AG04450 (cell line): ENCODE measurements at regions of chr16 and their contacts with region 1.

Region 1: GRCh38 chr16:88737298-88738150 is 31.2 kb downstream of the CTU2 start:
- DNase-seq: peak; percentile 29
- H3K4me3 ChIP-seq: no peak overlapping the region
- H3K27ac ChIP-seq: peak overlapping the region; percentile 21
- H3K27me3 ChIP-seq: no peaks in the 10 kb centered on the region
- CTCF ChIP-seq: peak; percentile 73

Region 2: DNA sequence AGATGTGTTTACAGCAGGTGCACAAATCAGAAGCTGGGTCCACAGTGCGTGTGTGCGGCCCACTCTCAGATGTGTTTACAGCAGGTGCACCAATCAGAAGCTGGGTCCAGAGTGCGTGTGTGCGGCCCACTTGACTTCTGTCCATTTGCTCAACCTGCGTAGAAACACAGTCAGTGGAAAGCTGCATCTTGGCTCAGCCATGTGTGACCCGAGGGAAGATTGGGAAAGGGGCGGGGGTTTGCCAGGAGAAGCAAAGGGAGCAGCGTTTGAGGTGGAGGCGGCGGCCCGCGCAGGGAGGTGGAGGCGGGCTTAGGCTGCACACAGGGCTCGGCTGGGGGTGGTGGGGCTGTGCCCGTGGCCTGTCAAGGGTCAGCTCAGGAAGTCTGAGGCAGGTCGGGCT is 27.0 kb before region 1 on chr16:
- CTCF ChIA-PET with region 1: interaction called, 10 read pairs
- POLR2A ChIA-PET with region 1: interaction called, 3 read pairs
- DNase-seq: no peak
- H3K4me3 ChIP-seq: no peak overlapping the region
- H3K27ac ChIP-seq: no peak overlapping the region
- H3K27me3 ChIP-seq: no peaks in the 10 kb centered on the region
- CTCF ChIP-seq: no peak

Region 3: DNA sequence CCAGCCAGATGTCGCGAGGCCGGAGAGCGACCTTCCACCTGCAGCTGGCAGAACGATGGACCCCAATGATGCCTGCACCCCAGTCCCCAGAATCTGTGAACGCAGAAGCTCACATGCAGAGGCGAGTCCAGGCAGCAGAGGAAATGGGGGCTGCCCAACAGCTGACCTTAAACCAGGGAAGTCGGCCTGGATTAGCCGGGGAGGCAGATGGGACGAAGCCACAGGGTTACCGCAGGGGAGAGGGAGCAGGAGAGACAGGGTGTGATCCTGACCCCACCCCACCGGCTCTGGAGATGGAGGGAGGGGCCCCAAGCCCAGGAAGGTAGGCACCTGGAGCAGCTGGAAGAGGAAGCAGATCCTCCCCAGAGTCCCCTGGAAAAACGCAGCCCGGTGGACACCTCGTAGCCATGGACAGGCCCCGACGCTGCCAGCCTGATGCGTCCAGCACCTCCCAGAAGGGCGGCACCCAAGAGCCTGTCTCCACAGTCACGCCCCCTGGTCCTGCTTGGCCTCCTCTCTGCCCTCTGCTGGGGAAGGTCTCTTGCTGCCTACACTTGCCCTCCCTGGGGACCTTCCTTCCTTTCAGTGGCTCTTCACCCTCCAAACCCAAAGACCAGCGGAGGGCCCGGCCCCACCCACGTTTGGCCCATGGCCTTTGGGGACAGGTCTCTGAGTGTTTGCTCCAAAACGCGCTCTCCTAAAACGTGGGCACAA is 10.2 kb after region 1 on chr16:
- CTCF ChIA-PET with region 1: interaction called, 21 read pairs
- POLR2A ChIA-PET with region 1: no interaction called
- DNase-seq: no peak
- H3K4me3 ChIP-seq: no peak overlapping the region
- H3K27ac ChIP-seq: no peak overlapping the region
- H3K27me3 ChIP-seq: no peaks in the 10 kb centered on the region
- CTCF ChIP-seq: peak; percentile 33

Region 4: DNA sequence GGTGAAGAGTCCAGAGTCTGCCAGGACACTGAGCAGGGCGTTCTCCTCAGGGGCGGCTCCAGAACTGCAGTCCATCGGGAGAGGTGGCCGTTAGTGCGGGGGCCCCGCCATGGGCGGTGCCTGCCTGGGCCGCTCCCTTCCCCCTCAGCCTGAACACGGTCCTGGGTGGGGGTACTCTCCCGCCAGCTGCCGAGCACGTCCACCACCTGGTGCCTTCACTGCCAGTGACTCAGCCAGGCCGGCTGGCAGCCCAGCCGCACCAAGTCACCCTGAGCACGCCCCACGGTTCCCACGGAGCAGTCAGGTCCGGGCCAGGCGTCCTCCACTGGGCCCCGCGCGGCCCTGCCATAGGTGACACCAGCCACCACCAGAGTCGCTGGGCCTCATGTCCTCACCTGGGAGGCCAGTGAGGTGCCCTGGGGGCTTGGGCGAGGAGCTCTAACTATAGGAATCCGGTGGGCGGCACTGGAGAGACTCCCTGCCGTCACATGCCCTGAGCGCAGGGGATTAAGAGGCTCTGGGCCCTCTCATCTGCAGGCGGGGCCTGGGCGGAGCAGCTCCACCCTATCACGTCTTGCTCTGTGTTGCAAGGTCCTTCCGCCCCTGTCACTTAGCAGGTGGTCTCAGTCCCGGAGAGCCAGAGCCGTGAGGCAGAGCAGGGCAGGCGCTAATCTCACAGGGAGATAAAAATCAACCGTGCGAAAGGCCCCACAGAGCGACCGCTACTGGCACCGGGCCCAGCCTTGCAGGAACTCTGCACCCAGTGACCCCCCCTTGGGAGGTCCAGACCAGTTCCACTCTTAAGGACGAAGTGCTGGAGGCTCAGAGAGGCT is 33.2 kb after region 1 on chr16:
- CTCF ChIA-PET with region 1: interaction called, 12 read pairs
- POLR2A ChIA-PET with region 1: interaction called, 6 read pairs
- DNase-seq: peak; percentile 63
- H3K4me3 ChIP-seq: peak overlapping the region; percentile 25
- H3K27ac ChIP-seq: peak overlapping the region; percentile 83
- H3K27me3 ChIP-seq: no peaks in the 10 kb centered on the region
- CTCF ChIP-seq: no peak

Region 5: GRCh38 chr16:88785106-88785924 is 47.8 kb after region 1 on chr16 and contains the start of gene PIEZO1:
- CTCF ChIA-PET with region 1: interaction called, 19 read pairs
- POLR2A ChIA-PET with region 1: interaction called, 6 read pairs
- DNase-seq: no peak
- H3K4me3 ChIP-seq: peak within 1 kb of the TSS; percentile 75
- H3K27ac ChIP-seq: peak within 1 kb of the TSS; percentile 77
- H3K27me3 ChIP-seq: no peaks in the 10 kb centered on the region
- CTCF ChIP-seq: peak; percentile 82
- polyA plus RNA-seq, gene PIEZO1: 47.0 and 72.7 TPM in 2 replicates

Region 6: GRCh38 chr16:88856828-88857733 is 119.6 kb after region 1 on chr16 and contains the starts of genes GALNS and TRAPPC2L:
- CTCF ChIA-PET with region 1: interaction called, 19 read pairs
- POLR2A ChIA-PET with region 1: no interaction called
- DNase-seq: peak; percentile 86
- H3K4me3 ChIP-seq: peak within 1 kb of the TSS; percentile 96
- H3K27ac ChIP-seq: peak within 1 kb of the TSS; percentile 47
- H3K27me3 ChIP-seq: no peaks in the 10 kb centered on the region
- CTCF ChIP-seq: no peak
- polyA plus RNA-seq, gene GALNS: 11.6 and 18.5 TPM in 2 replicates
- polyA plus RNA-seq, gene TRAPPC2L: 72.8 and 101 TPM in 2 replicates

Region 7: DNA sequence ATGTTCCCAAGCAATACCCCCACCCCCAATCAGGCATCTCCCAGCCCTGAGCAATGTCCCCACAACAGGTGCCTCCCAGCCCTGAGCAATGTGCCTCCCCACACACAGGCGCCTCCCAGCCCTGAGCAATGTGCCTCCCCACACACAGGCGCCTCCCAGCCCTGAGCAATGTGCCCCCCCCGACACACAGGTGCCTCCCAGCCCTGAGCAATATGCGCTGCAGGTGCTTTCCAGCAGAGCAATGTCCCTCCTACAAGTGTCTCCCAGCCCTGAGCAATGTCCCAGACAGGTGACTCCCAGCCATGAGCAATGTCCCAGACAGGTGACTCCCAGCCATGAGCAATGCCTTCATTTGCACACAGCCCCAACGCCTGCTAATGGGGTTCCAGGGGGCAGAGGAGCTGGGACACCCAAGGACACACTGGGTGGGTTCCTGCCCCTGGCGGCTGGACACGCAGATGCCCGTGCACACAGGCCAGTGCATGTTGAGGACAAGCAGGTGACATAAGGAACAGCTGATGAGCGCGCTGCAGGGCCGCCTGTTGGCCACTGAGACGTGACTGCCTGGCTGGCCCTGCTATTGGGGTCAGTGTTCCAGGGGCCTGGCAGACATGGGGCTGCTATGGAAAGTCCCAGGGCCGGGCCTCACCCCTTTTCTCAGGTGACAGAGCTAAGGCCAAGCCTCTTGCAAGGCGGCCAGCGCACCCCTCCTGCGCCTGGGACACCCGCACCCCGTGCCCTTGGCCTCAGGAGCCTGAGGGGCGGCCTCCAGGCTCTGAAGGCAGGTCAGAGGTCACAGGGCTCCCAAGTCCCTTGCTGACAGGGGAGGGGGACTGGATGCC is 155.8 kb after region 1 on chr16:
- CTCF ChIA-PET with region 1: no interaction called
- POLR2A ChIA-PET with region 1: no interaction called
- DNase-seq: no peak
- H3K4me3 ChIP-seq: no peak overlapping the region
- H3K27ac ChIP-seq: no peak overlapping the region
- H3K27me3 ChIP-seq: no peaks in the 10 kb centered on the region
- CTCF ChIP-seq: no peak